ENCODE measurements at regions of chr3 and their contacts with region 1.

Region 1: GRCh38 chr3:168165390-168166269 is 69.9 kb upstream of the GOLIM4 start:
- DNase-seq: peak; percentile 63
- H3K4me3 ChIP-seq: no peak overlapping the region
- H3K27ac ChIP-seq: no peak overlapping the region
- H3K4me1 ChIP-seq: no peaks in the 10 kb centered on the region
- H3K27me3 ChIP-seq: no peaks in the 10 kb centered on the region
- CTCF ChIP-seq: peak; percentile 42 to 89 (median 80)
- POLR2A ChIP-seq: no peak

Region 2: GRCh38 chr3:168047190-168047795 is 118.3 kb before region 1 on chr3:
- intact Hi-C with region 1: loop called (anchors 1 kb)
- DNase-seq: peak; percentile 37
- H3K4me3 ChIP-seq: no peak overlapping the region
- H3K27ac ChIP-seq: no peak overlapping the region
- H3K4me1 ChIP-seq: no peaks in the 10 kb centered on the region
- H3K27me3 ChIP-seq: no peaks in the 10 kb centered on the region
- CTCF ChIP-seq: peak; percentile 65 to 97 (median 92)
- POLR2A ChIP-seq: no peak

Region 3: GRCh38 chr3:168095611-168096209 is 69.9 kb before region 1 on chr3 and contains the start of gene GOLIM4:
- intact Hi-C with region 1: loop called (anchors 2 kb)
- DNase-seq: peak; percentile 94
- H3K4me3 ChIP-seq: peak within 1 kb of the TSS; percentile 65 to 70
- H3K27ac ChIP-seq: peak within 1 kb of the TSS; percentile 87 to 89
- H3K4me1 ChIP-seq: no peaks in the 10 kb centered on the region
- H3K27me3 ChIP-seq: no peaks in the 10 kb centered on the region
- CTCF ChIP-seq: peak in 1 of 4 experiments; percentile 14
- POLR2A ChIP-seq: peak; percentile 63
- total RNA-seq, gene GOLIM4: 22.3 to 25.5 TPM

Region 4: GRCh38 chr3:168123201-168124176 is 42.1 kb before region 1 on chr3:
- intact Hi-C with region 1: no loop called
- DNase-seq: peak; percentile 33
- H3K4me3 ChIP-seq: no peak overlapping the region
- H3K27ac ChIP-seq: no peak overlapping the region
- H3K4me1 ChIP-seq: no peaks in the 10 kb centered on the region
- H3K27me3 ChIP-seq: no peaks in the 10 kb centered on the region
- CTCF ChIP-seq: no peak
- POLR2A ChIP-seq: no peak